Spleen (tissue), 13 donors: ENCODE measurements at regions of chr10 and their contacts with region 1.

Region 1: GRCh38 chr10:89029785-89030437 is 39.3 kb downstream of the FAS start:
- DNase-seq: peak; percentile 88
- H3K4me3 ChIP-seq: no peak overlapping the region
- H3K27ac ChIP-seq: peak overlapping the region in 4 of 8 donors; percentile 54 to 79 (median 72)
- H3K4me1 ChIP-seq: peaks cover 6 to 41% (median 29%) of the 10 kb centered on the region in 6 donors
- H3K27me3 ChIP-seq: no peaks in the 10 kb centered on the region
- CTCF ChIP-seq: peak; percentile 83 to 95 (median 91)
- POLR2A ChIP-seq: no peak

Region 2: DNA sequence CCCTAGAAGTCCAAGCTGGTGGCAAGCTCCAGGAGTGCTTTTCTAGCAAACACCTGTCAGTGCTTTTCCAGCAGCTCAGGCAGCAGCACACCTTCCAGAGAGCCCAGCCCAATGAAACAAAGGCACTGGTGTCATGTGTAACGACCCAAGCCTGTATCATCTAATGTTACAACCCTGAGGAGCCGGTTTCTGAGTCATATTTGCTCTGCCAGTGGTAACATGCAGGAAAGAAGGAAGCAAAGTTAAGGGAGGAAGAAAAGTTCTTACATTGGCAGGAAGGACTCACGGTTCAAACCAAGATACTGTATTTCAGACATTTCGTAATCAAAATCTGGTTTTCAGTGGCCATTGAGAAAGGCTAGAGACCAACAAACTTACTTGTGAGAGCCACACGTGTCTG is 178.2 kb before region 1 on chr10 and contains the start of gene ANKRD22:
- intact Hi-C with region 1: no loop called
- DNase-seq: no peak
- H3K4me3 ChIP-seq: peak within 1 kb of the TSS in 5 of 8 donors; percentile 8 to 47 (median 16)
- H3K27ac ChIP-seq: peak within 1 kb of the TSS in 7 of 8 donors; percentile 46 to 84 (median 77)
- H3K4me1 ChIP-seq: peaks cover 0 to 64% (median 8%) of the 10 kb centered on the region in 6 donors
- H3K27me3 ChIP-seq: no peaks in the 10 kb centered on the region
- CTCF ChIP-seq: no peak
- POLR2A ChIP-seq: no peak
- total RNA-seq, gene ANKRD22: 4.8 to 11.5 (median 7.7) TPM

Region 3: DNA sequence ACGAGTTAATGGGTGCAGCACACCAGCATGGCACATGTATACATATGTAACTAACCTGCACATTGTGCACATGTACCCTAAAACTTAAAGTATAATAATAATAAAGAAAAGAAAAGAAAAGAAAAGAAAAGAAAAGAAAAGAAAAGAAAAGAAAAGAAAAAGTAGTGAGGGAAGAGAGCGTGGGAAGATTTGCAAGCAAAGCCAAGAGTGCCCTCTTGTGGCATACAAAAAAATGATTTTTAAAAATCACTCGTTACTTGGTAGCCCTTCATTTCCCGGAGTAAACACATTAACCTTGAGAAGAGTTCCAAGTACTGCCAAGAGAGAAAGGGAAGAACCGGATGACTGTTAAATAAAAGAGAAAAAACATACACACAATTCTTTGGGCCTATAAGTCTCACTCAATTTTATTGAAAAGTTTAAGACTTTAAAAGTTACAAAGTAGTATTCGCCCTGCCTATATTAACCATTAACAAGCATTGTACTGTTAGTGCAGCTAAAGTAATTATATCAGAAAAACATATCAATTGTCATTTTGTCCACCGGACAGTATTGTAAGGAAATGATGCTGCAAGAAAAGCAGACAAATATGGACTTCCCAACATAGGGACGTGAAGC is 183.4 kb after region 1 on chr10:
- intact Hi-C with region 1: loop called (anchors 5 kb)
- DNase-seq: no peak
- H3K4me3 ChIP-seq: no peak overlapping the region
- H3K27ac ChIP-seq: peak overlapping the region in 3 of 8 donors; percentile 26 to 35 (median 31)
- H3K4me1 ChIP-seq: peaks cover 14 to 36% (median 23%) of the 10 kb centered on the region in 6 donors
- H3K27me3 ChIP-seq: peaks cover 0 to 12% (median 3%) of the 10 kb centered on the region in 7 donors
- CTCF ChIP-seq: peak; percentile 10 to 86 (median 58)
- POLR2A ChIP-seq: no peak